PC-3 (cell line): ENCODE measurements at regions of chr2 and their contacts with region 1.

Region 1: DNA sequence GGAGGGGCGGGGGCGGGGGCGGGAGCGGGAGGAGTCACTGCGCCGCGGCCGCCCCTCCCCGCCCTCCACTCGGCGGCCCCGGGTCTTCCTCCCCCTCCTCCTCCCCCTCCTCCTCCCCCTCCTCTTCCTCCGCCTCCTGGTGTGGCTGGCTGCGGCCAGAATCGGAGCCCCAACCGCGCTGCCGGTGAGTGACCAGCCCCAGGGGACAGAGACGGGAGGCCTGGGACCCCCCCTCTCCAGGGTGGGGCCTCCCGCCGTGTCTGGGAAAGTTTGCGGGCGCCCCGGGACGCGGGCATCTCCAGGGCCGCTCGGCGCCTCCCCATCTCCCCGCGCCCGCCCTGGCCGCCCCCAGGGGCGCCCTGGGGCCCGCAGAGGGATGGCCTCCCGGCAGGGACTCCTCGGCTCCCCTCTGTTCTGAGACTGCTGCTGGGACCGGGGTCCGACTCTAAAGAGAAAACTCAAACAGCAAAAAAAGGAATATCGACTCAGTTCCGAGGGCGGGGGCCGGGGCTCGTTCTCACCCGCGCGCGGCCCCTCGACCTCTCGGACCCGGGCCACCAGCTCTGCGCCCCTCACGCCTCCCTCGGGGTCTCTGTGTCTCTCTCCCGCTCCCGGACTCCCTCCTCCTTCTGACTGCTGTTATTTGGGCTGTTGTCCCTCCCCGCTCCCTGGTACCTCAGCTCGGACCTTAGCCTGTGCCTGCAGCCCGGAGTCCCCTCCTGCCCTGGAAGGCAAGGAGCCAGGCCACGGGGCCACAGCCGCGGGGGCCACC is at the start of gene STON1:
- DNase-seq: peak; percentile 12
- ATAC-seq: peak; percentile 50
- H3K4me3 ChIP-seq: peak within 1 kb of the TSS; percentile 92
- H3K27ac ChIP-seq: peak within 1 kb of the TSS; percentile 45
- H3K4me1 ChIP-seq: peaks cover 14% of the 10 kb centered on the region
- H3K27me3 ChIP-seq: no peaks in the 10 kb centered on the region
- CTCF ChIP-seq: no peak
- total RNA-seq, gene STON1: 1.2 TPM in 2 replicates

Region 2: DNA sequence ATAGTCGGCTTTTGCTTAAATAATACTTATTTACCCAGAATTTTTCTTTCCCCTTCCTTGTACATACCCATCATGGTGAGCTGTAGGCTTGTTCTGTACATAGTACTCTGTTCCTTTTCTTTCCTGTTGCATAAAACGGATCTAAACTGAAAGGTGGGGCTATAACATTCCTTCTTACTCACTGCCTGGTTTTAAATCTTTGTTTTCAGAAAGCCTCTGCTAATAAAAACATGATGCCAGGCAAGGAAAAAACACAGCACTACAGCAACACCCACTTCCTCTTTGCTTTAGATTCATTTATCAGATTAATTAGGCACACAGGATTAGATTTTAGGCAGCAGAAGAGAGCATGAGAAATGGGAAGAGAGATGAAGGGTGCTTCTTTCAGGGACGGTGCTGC is 19.9 kb before region 1 on chr2:
- CTCF ChIA-PET with region 1: no interaction called
- POLR2A ChIA-PET with region 1: no interaction called
- intact Hi-C with region 1: loop called (anchors 2 kb)
- DNase-seq: peak; percentile 57
- ATAC-seq: peak; percentile 97
- H3K4me3 ChIP-seq: no peak overlapping the region
- H3K27ac ChIP-seq: peak overlapping the region; percentile 55
- H3K4me1 ChIP-seq: peaks cover 25% of the 10 kb centered on the region
- H3K27me3 ChIP-seq: no peaks in the 10 kb centered on the region
- CTCF ChIP-seq: no peak

Region 3: GRCh38 chr2:48829036-48829435 is 298.8 kb after region 1 on chr2:
- CTCF ChIA-PET with region 1: no interaction called
- POLR2A ChIA-PET with region 1: no interaction called
- intact Hi-C with region 1: no loop called
- DNase-seq: no peak
- ATAC-seq: no peak
- H3K4me3 ChIP-seq: no peak overlapping the region
- H3K27ac ChIP-seq: no peak overlapping the region
- H3K4me1 ChIP-seq: no peaks in the 10 kb centered on the region
- H3K27me3 ChIP-seq: no peaks in the 10 kb centered on the region
- CTCF ChIP-seq: no peak

Region 4: DNA sequence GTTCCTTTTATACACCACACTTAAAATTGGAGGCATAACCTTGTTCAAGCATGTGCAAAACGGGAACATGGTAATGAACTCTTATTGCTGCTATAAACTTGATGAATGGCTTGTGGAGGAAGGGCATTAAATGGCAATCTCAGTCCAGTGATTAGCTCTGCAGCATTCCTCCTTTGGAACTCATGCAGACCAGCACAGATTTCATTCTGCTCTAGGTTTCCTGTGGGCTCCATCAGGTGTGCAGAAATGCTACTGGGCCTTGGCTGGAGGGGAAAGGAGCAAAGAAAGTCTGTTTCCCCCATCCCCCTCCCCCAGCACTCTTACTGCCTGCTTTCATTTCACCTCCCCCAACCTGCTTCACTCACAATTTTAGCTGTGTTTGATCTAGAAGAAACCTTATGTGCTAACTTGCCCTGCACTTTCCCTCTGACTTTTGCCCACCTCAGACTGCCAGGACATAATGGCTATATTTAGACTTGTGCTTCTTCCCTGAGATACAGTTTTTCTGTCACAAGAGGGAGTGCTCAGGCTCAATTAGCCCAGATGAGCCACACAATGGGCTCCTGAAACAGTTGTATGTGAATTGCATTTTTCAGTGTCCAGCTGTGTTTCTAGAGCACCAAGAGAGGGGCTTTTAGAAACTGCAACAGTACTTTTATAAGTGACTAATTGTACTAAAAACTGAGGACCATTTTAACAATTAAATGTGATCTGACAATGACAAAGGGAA is 514.3 kb after region 1 on chr2:
- CTCF ChIA-PET with region 1: no interaction called
- POLR2A ChIA-PET with region 1: no interaction called
- intact Hi-C with region 1: no loop called
- DNase-seq: no peak
- ATAC-seq: no peak
- H3K4me3 ChIP-seq: no peak overlapping the region
- H3K27ac ChIP-seq: no peak overlapping the region
- H3K4me1 ChIP-seq: no peaks in the 10 kb centered on the region
- H3K27me3 ChIP-seq: no peaks in the 10 kb centered on the region
- CTCF ChIP-seq: no peak